HepG2 (cell line): ENCODE measurements at regions of chr22 and their contacts with region 1.

Region 1: GRCh38 chr22:30326706-30327362 is at the start of gene TBC1D10A:
- DNase-seq: peak; percentile 90
- ATAC-seq: peak; percentile 92
- H3K4me3 ChIP-seq: peak within 1 kb of the TSS; percentile 89 to 95 (median 89)
- H3K27ac ChIP-seq: peak within 1 kb of the TSS; percentile 60
- H3K4me1 ChIP-seq: peaks cover 39% of the 10 kb centered on the region
- H3K27me3 ChIP-seq: no peaks in the 10 kb centered on the region; a peak in 1 of 5 replicates
- CTCF ChIP-seq: no peak
- EP300 ChIP-seq: no peak
- POLR2A ChIP-seq: peak in 1 of 2 experiments; percentile 68; a peak in 2 of 4 replicates
- RAD21 ChIP-seq: peak; percentile 55
- total RNA-seq, gene TBC1D10A: 3.6 and 4.2 TPM in 2 replicates

Region 2: DNA sequence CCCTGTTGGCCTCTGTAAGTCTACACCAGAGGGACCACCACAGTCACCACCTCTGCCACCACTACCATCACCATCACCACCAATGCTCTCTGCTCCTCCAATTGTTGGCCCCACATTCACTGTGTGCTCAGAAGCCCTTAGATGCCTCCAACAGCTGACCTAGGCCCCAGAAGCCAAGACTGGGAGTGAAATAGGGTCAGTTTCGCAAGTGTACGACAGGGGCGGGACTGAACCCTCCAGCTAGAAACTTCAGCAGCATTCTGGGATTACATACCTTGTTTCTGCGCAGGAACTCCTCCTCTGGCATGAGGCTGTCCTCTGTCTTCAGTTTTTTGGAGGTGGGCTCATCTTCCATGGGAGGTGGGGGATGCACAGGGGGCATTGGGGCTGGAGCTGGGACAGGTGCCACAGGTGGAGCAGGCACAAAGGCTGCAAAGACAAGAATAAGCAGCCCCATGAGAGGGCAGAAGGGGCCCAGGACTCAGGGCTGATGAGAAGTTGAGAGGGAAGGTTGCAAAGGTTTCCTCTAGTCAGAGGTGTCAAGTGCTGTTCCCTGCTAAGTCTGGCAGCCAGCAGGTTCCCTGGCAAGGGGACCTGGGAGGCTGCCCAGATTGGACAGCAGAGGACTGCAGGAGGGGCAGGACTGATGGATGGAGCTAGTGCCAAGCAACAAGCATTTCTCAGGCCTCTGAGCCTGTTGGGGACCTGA is 10.1 kb after region 1 on chr22:
- CTCF ChIA-PET with region 1: no interaction called
- POLR2A ChIA-PET with region 1: interaction called, 11 read pairs
- in situ Hi-C with region 1: no loop called
- intact Hi-C with region 1: no loop called
- DNase-seq: no peak
- ATAC-seq: no peak
- H3K4me3 ChIP-seq: no peak overlapping the region
- H3K27ac ChIP-seq: no peak overlapping the region
- H3K4me1 ChIP-seq: peaks cover 20% of the 10 kb centered on the region
- H3K27me3 ChIP-seq: no peaks in the 10 kb centered on the region
- CTCF ChIP-seq: no peak
- EP300 ChIP-seq: no peak
- POLR2A ChIP-seq: no peak
- RAD21 ChIP-seq: no peak

Region 3: DNA sequence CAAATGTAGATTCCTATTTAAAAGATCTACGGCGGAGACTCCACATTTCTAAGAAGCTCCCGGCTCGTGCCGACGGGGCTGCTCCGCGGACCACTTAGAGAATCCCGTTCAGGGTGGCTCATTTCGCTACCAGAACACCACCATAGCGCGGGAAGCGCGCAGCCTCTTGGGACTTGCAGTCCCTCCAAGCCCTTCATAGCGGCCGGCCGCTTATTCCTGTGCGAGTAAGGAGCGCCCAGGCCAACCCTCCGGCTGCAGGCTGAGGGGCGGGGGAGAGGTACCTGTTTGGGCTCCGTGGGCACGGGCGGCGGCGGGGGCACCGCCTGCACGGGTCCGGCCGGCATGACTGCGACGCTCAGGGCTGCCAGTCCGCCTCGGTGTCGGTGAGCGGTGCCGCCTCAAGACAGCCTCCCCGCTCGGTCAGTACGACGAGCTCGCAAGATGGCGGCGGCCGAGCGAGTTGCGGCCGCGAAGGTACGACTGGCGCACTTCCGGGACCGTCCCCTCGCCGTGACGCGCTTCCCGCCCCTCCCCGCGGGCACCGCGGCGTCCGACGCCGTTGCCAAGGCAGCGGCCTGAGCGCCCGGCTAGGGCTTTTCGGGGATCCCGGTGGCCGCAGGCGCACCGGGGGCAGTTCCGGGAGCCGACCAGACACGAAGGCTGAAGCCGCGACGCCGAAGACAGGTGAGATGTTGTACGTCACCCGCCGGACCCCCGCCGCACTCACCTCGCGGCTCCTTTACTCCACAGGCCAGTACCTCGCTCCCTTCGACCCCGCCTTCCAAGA is 29.8 kb after region 1 on chr22 and contains the starts of genes CCDC157 and SF3A1:
- CTCF ChIA-PET with region 1: no interaction called
- POLR2A ChIA-PET with region 1: interaction called, 39 read pairs
- in situ Hi-C with region 1: no loop called
- intact Hi-C with region 1: no loop called
- DNase-seq: peak; percentile 88
- ATAC-seq: peak; percentile 97
- H3K4me3 ChIP-seq: peak within 1 kb of the TSS; percentile 89 to 99 (median 96)
- H3K27ac ChIP-seq: peak within 1 kb of the TSS; percentile 93
- H3K4me1 ChIP-seq: peaks cover 50% of the 10 kb centered on the region
- H3K27me3 ChIP-seq: no peaks in the 10 kb centered on the region; a peak in 2 of 5 replicates
- CTCF ChIP-seq: peak; percentile 19; the same call in 1 of the 2 replicates
- EP300 ChIP-seq: no peak
- POLR2A ChIP-seq: peak; percentile 94 to 96
- RAD21 ChIP-seq: no peak
- total RNA-seq, gene CCDC157: 0.98 and 1.6 TPM in 2 replicates
- total RNA-seq, gene SF3A1: 22.0 and 31.8 TPM in 2 replicates

Region 4: GRCh38 chr22:30460147-30460546 is 133.3 kb after region 1 on chr22:
- CTCF ChIA-PET with region 1: no interaction called
- POLR2A ChIA-PET with region 1: no interaction called
- in situ Hi-C with region 1: no loop called
- intact Hi-C with region 1: no loop called
- DNase-seq: no peak
- ATAC-seq: no peak
- H3K4me3 ChIP-seq: no peak overlapping the region
- H3K27ac ChIP-seq: no peak overlapping the region
- H3K4me1 ChIP-seq: no peaks in the 10 kb centered on the region
- H3K27me3 ChIP-seq: peaks cover 0 to 12% of the 10 kb centered on the region in 2 experiments; a peak in 2 of 5 replicates
- CTCF ChIP-seq: no peak
- EP300 ChIP-seq: no peak
- POLR2A ChIP-seq: no peak
- RAD21 ChIP-seq: no peak